GM12878 (cell line): ENCODE measurements at regions of chr5 and their contacts with region 1.

Region 1: DNA sequence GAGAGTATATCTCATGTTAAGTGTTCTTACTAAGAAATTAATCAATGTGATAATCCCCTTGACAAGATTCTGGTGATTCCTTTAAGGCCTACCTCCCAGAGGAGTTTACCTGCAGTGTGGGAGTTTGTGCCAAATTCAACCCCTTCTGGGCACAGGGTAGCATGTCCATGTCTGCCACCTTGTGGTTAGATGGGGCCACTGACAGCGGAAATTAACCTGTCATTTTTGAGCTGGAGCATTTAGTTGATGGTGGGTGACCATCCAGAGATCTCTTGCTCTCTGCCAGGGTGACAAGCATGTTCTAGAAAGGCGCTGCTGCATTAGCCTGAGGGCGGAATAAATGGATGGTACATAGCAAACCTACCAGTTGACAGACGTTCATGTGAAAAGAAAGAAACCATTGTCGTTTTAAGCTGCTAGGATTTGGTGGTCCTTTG is 132.2 kb downstream of the FBXO4 start:
- DNase-seq: peak; percentile 20
- ATAC-seq: peak; percentile 96
- H3K4me3 ChIP-seq: no peak overlapping the region
- H3K27ac ChIP-seq: no peak overlapping the region
- H3K4me1 ChIP-seq: no peaks in the 10 kb centered on the region
- H3K27me3 ChIP-seq: no peaks in the 10 kb centered on the region
- CTCF ChIP-seq: peak; percentile 81 to 89 (median 82)
- EP300 ChIP-seq: no peak
- POLR2A ChIP-seq: no peak
- RAD21 ChIP-seq: peak; percentile 82

Region 2: DNA sequence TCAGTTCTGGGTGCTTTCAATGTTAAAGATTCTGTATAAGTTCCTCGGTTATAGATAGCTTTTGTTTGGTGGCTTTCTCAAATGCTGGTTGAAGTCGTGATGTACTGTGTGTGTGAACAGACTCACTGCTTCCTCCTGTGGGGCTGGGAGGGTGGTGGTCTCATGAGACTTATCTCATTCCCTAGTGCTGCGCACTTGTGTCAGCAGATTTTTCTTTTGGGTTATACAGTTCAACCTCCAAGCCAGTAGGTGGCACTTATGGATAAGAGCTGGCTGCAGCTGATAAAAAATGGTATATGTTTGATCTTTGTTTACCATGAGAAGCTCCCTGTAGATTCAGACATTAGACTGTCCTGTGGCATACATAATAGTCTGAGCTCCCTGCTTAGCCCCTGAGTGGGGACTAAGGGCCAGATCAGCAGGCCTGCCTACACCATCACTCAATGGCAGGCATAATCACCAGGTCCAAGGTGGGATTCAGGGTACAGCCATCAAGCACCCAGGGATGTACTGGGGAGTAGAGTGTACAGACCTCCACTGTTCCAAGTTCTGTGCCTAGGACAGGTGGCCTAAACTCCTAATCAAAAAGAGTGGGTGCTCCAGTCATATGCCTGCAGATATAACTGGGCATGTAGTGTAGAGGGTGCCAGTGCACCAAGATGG is 361.2 kb before region 1 on chr5:
- CTCF ChIA-PET with region 1: interaction called, 6 read pairs
- POLR2A ChIA-PET with region 1: no interaction called
- RAD21 ChIA-PET with region 1: interaction called, 6 read pairs
- SMC1A ChIA-PET with region 1: interaction called, 3 read pairs
- in situ Hi-C with region 1: loop called (anchors 10 kb)
- intact Hi-C with region 1: loop called (anchors 5 kb)
- DNase-seq: no peak
- ATAC-seq: peak; percentile 90
- H3K4me3 ChIP-seq: no peak overlapping the region
- H3K27ac ChIP-seq: no peak overlapping the region
- H3K4me1 ChIP-seq: no peaks in the 10 kb centered on the region
- H3K27me3 ChIP-seq: no peaks in the 10 kb centered on the region
- CTCF ChIP-seq: peak; percentile 51 to 66 (median 57); a peak in 5 of 6 replicates
- EP300 ChIP-seq: no peak
- POLR2A ChIP-seq: no peak
- RAD21 ChIP-seq: peak; percentile 73

Region 3: GRCh38 chr5:41851116-41851515 is 206.2 kb before region 1 on chr5:
- CTCF ChIA-PET with region 1: interaction called, 300 read pairs
- POLR2A ChIA-PET with region 1: no interaction called
- RAD21 ChIA-PET with region 1: interaction called, 127 read pairs
- SMC1A ChIA-PET with region 1: interaction called, 172 read pairs
- in situ Hi-C with region 1: loop called (anchors 5 kb)
- intact Hi-C with region 1: loop called (anchors 1 kb)
- DNase-seq: no peak
- ATAC-seq: no peak
- H3K4me3 ChIP-seq: no peak overlapping the region
- H3K27ac ChIP-seq: no peak overlapping the region
- H3K4me1 ChIP-seq: no peaks in the 10 kb centered on the region
- H3K27me3 ChIP-seq: no peaks in the 10 kb centered on the region
- CTCF ChIP-seq: no peak
- EP300 ChIP-seq: no peak
- POLR2A ChIP-seq: no peak
- RAD21 ChIP-seq: no peak

Region 4: DNA sequence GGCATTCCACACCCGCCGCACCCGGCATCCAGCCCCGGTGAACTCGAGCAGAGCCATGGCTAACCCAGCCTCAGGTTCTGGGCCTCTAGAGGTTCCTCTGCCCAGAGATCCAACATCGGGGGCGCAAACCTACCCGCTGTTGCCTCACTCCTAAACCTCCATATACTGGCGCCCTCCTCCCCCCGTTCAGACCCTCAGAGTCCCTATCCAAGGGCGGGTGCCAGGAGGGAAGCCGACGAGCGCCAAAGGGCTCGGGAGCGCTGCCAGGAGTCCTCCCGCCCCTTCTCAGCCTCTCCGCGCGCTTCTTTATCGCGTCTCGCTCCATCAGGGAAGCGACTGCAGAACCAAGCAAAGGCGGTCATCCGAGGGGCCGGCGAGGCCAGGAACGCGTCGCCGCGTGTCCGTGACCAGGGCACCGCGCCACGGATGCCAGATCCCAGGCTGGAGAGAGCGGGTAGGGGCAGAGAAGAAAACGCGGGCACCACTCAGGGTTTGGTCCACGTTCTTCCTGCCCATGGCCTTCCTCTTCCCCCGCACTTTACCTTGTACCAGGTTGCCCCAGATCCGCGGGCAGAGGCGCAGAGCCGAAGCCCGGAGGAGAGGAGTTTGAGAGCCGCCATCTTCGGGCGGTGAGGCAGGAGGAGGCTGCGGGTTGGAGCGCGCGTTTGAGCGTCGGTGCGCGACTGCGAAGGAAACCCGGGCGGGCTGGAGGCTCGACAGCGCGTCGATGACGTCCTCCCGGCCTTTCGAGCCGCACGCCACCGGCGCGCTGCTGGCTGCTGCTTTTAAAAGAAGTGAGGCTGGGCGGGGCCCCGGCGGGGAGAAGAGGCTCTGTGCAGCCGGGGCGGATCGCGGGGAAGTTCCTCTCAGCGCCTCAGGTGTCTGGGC is 187.3 kb before region 1 on chr5 and contains the start of gene OXCT1:
- CTCF ChIA-PET with region 1: interaction called, 17 read pairs
- POLR2A ChIA-PET with region 1: no interaction called
- RAD21 ChIA-PET with region 1: interaction called, 5 read pairs
- SMC1A ChIA-PET with region 1: interaction called, 10 read pairs
- in situ Hi-C with region 1: no loop called
- intact Hi-C with region 1: no loop called
- DNase-seq: peak; percentile 45
- ATAC-seq: peak; percentile 95
- H3K4me3 ChIP-seq: peak within 1 kb of the TSS; percentile 79
- H3K27ac ChIP-seq: peak within 1 kb of the TSS; percentile 89
- H3K4me1 ChIP-seq: peaks cover 6% of the 10 kb centered on the region
- H3K27me3 ChIP-seq: no peaks in the 10 kb centered on the region
- CTCF ChIP-seq: no peak
- EP300 ChIP-seq: no peak
- POLR2A ChIP-seq: peak; percentile 98
- RAD21 ChIP-seq: no peak
- polyA plus RNA-seq, gene OXCT1: 46.9 to 61.3 TPM

Region 5: DNA sequence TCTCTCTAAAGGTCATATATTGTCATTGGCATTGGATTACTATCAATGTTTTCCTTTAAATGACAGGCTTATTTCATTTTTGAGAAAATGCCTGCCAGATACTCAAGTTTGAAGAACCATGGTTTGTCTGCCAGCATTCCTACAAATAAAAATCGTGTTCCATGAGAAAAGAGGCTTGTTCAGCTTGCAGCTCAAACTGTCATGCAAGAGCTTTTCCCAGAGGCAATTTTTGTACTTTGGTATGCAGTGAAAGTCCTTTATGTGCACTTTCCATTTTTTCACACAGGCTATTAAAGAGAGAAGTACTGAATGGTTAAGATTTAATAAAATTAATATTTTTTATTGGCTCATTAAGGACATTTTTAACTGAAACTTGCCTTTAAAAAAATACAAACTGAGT is 21.7 kb before region 1 on chr5:
- CTCF ChIA-PET with region 1: interaction called, 10 read pairs
- POLR2A ChIA-PET with region 1: no interaction called
- RAD21 ChIA-PET with region 1: no interaction called
- SMC1A ChIA-PET with region 1: interaction called, 6 read pairs
- in situ Hi-C with region 1: no loop called
- intact Hi-C with region 1: no loop called
- DNase-seq: no peak
- ATAC-seq: no peak
- H3K4me3 ChIP-seq: no peak overlapping the region
- H3K27ac ChIP-seq: no peak overlapping the region
- H3K4me1 ChIP-seq: no peaks in the 10 kb centered on the region
- H3K27me3 ChIP-seq: no peaks in the 10 kb centered on the region
- CTCF ChIP-seq: no peak
- EP300 ChIP-seq: no peak
- POLR2A ChIP-seq: no peak
- RAD21 ChIP-seq: no peak

Region 6: GRCh38 chr5:42767491-42768105 is 710.3 kb after region 1 on chr5:
- CTCF ChIA-PET with region 1: interaction called, 20 read pairs
- POLR2A ChIA-PET with region 1: no interaction called
- RAD21 ChIA-PET with region 1: interaction called, 18 read pairs
- SMC1A ChIA-PET with region 1: interaction called, 12 read pairs
- in situ Hi-C with region 1: no loop called
- intact Hi-C with region 1: no loop called
- DNase-seq: no peak
- ATAC-seq: peak; percentile 53
- H3K4me3 ChIP-seq: no peak overlapping the region
- H3K27ac ChIP-seq: no peak overlapping the region
- H3K4me1 ChIP-seq: no peaks in the 10 kb centered on the region
- H3K27me3 ChIP-seq: no peaks in the 10 kb centered on the region
- CTCF ChIP-seq: peak; percentile 31 to 56 (median 42); a peak in 4 of 6 replicates
- EP300 ChIP-seq: no peak
- POLR2A ChIP-seq: no peak
- RAD21 ChIP-seq: peak; percentile 70